BJ (cell line): ENCODE measurements at regions of chr3 and their contacts with region 1.

Region 1: DNA sequence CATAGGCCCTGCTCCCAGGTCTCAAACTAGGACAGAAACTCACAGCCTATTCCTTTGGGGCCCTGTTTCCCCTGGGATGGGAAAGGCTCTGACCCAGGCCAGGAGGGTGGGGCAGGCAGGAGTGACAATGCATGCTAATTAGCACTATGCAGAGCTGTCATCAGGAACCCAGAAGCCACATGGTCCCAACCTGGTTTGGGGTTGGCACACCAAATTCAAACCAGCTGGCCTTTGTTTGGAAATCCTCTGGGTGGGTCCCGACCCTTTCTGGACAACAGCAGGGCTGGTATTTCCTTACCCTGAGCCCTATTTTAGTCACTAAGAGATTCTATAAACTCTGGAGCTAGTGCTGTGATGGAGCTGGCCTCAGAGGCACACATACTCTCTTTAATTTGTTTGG is 166.2 kb downstream of the LRTM1 start:
- DNase-seq: no peak
- H3K4me3 ChIP-seq: no peak overlapping the region
- H3K27me3 ChIP-seq: no peaks in the 10 kb centered on the region
- CTCF ChIP-seq: no peak

Region 2: DNA sequence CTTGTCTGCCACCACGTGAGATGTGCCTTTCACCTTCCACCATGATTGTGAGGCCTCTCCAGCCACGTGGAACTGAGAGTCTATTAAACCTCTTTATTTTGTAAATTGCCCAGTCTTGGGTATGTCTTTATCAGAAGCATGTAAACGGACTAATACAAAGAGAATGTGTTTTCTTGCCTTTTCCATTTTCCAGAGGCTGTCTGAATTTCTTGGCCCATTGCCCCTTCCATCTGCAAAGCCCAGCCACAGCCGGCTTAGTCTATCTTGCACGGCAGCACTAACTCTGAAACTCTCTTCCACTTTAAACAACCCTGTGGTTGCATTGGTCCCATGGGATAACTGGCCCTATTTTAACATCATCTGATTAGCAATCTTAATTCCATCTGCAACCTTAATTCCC is 49.1 kb before region 1 on chr3:
- CTCF ChIA-PET with region 1: no interaction called
- POLR2A ChIA-PET with region 1: no interaction called
- DNase-seq: no peak
- H3K4me3 ChIP-seq: no peak overlapping the region
- H3K27me3 ChIP-seq: no peaks in the 10 kb centered on the region
- CTCF ChIP-seq: no peak

Region 3: DNA sequence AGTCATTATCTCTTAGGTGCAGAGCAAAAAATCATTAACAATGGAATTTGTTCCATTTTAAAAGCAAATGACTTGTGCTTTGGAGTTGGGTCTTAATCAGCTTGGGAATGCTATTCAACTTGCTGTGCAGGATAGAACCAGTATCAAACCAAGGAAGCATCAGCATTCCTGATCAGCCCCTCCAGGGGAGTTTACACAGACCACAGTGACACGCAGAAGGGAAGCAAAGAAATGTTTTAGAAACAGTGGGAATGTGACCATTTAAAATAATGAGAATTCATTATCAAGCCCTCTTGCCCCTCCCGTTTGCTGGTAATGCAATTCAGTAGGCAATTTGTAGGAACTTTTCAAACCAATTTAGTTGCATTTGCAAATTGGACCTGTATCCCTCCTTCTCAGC is 11.1 kb after region 1 on chr3:
- CTCF ChIA-PET with region 1: interaction called, 11 read pairs
- POLR2A ChIA-PET with region 1: no interaction called
- DNase-seq: no peak
- H3K4me3 ChIP-seq: no peak overlapping the region
- H3K27me3 ChIP-seq: no peaks in the 10 kb centered on the region
- CTCF ChIP-seq: no peak